Mucosa of descending colon (tissue), 3 donors: ENCODE measurements at regions of chr10 and their contacts with region 1.

Region 1: GRCh38 chr10:110354322-110354766 is 49.6 kb upstream of the SMNDC1 start:
- DNase-seq: peak; percentile 81 to 96 (median 83)
- ATAC-seq: peak; percentile 73
- H3K4me3 ChIP-seq: no peak overlapping the region
- H3K4me1 ChIP-seq: no peaks in the 10 kb centered on the region
- CTCF ChIP-seq: peak; percentile 56

Region 2: DNA sequence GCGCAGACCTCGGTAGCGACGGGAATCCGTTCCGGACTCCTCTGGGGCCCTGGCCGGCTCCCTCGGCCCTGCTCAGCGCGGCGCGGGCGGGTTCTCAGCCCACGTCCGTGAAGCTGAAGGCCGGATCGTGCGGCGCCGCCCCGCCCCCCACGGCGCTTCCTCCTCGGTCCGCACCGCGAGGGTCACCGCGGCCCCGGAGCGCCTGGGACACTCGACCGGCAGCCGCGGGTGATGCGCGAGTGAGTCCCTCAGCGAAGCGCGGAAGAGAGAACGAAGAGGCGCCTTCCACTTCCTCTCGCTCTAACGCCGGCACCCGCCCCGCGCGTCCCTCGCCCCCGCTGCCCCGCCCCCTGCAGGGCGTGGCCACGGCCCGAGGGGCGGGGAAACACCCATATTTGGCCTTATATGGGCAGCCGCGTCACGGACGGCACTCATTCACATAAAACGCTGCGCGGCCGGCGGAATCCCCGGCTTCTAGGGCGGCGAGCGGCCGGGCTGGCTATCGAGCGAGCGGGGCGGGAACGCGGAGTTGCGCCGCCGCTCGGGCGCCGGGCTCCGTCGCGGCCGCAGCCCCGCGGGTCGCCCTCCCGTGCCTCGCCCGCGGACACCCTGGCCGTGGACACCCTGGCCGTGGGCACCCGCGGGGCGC is 143.2 kb after region 1 on chr10 and contains the start of gene DUSP5:
- intact Hi-C with region 1: loop called in 1 of 2 experiments (anchors 10 kb)
- DNase-seq: peak; percentile 95 to 98 (median 96)
- ATAC-seq: peak; percentile 94
- H3K4me3 ChIP-seq: peak within 1 kb of the TSS; percentile 48
- H3K4me1 ChIP-seq: peaks cover 8% of the 10 kb centered on the region
- CTCF ChIP-seq: no peak
- total RNA-seq, gene DUSP5: 21.5 to 40.1 (median 23.9) TPM